ENCODE measurements at regions of chr18 and their contacts with region 1.

Region 1: DNA sequence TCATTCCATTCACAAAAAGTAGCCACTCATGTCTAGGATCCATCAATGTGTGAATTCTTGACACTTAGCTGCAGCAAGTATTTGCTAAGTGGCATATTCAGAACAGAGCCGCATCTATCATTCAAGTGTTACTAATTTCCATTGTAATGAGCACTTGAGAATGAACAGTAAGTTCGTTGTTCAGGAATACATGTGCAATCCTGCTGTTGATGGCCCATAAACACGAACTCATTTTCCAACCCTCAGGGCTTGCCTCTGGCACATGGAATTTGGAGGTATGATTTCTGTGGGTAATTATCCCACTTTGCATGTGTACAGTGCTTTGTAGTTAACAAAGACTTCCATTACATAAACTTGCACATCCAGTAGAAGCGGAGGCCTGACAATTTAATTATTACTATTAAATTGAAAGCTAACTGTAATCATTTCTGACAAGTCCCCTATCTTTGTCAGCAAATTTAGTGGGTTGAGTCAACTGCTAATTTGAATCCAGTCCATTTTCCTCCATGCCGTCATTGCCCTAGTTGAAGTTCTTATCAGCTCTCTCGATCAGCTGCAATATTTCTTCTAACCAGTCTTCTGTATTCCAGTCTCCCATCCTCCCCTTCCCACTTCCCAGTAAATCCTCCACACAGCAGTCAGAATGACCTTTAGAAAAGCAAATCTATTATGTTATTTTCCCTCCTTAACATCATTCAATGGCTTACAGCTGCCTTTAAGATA is 116.0 kb upstream of the AQP4 start:
- DNase-seq: no peak
- ATAC-seq: no peak
- H3K4me3 Mint-ChIP-seq: no peak overlapping the region
- H3K27ac Mint-ChIP-seq: no peak overlapping the region
- H3K4me1 Mint-ChIP-seq: peaks cover 19% of the 10 kb centered on the region
- H3K27me3 Mint-ChIP-seq: no peaks in the 10 kb centered on the region
- CTCF ChIP-seq: no peak

Region 2: GRCh38 chr18:26004832-26005231 is 976.7 kb before region 1 on chr18:
- CTCF ChIA-PET with region 1: no interaction called
- POLR2A ChIA-PET with region 1: no interaction called
- intact Hi-C with region 1: no loop called
- DNase-seq: no peak
- ATAC-seq: no peak
- H3K4me3 Mint-ChIP-seq: no peak overlapping the region
- H3K27ac Mint-ChIP-seq: no peak overlapping the region
- H3K4me1 Mint-ChIP-seq: no peaks in the 10 kb centered on the region
- H3K27me3 Mint-ChIP-seq: no peaks in the 10 kb centered on the region
- CTCF ChIP-seq: no peak

Region 3: GRCh38 chr18:26919627-26920026 is 61.9 kb before region 1 on chr18:
- CTCF ChIA-PET with region 1: no interaction called
- POLR2A ChIA-PET with region 1: no interaction called
- intact Hi-C with region 1: loop called (anchors 10 kb)
- DNase-seq: no peak
- ATAC-seq: no peak
- H3K4me3 Mint-ChIP-seq: no peak overlapping the region
- H3K27ac Mint-ChIP-seq: no peak overlapping the region
- H3K4me1 Mint-ChIP-seq: no peaks in the 10 kb centered on the region
- H3K27me3 Mint-ChIP-seq: no peaks in the 10 kb centered on the region
- CTCF ChIP-seq: no peak

Region 4: GRCh38 chr18:26993568-26993967 is 12.0 kb after region 1 on chr18:
- CTCF ChIA-PET with region 1: no interaction called
- POLR2A ChIA-PET with region 1: no interaction called
- intact Hi-C with region 1: no loop called
- DNase-seq: no peak
- ATAC-seq: no peak
- H3K4me3 Mint-ChIP-seq: no peak overlapping the region
- H3K27ac Mint-ChIP-seq: no peak overlapping the region
- H3K4me1 Mint-ChIP-seq: no peaks in the 10 kb centered on the region
- H3K27me3 Mint-ChIP-seq: peaks cover 2% of the 10 kb centered on the region
- CTCF ChIP-seq: no peak

Measured in activated B cell treated with CpG ODN at 0.5 μM for 24 hours (primary cell).